Activated CD4-positive, alpha-beta memory T cell treated with anti-CD3 and anti-CD28 coated beads, Interleukin-2, amount 10 ng/mL, durations not matched to agents 7 days and 5 days (primary cell): ENCODE measurements at regions of chr16 and their contacts with region 1.

Region 1: DNA sequence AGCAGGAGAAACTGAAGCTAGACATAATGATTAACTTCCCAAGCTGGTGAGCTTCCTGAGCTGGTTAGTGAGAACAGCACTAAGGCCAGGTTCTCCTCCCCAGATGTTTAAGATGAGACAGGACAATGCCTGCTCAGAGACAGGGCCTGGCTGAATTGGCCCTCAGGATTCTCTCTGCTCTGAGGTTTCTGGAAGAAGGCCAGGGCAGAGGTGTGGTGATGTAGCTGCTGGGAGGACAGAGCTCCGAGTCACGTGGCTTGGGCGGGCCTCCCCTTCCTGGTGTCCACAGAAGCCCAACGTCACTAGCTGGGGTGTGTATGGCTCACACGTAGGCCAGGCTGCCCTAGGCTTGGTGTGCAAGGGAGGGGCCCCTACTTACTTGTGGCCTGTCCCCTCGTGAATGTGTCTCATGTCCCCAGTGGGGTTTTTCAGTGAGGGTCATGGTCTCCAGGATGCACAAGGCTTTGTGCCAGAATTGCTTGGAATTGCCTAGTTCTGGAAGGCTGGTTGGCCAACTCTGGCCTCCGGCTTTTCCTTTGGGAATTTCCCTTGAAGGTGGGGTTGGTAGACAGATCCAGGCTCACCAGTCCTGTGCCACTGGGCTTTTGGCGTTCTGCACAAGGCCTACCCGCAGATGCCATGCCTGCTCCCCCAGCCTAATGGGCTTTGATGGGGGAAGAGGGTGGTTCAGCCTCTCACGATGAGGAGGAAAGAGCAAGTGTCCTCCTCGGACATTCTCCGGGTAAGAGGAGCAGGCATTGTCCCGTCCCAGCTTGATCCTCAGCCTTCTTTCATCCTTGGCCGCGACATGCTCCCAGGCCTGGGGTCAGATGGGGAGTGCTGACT is 3.4 kb downstream of the NOD2 start:
- DNase-seq: peak; percentile 84
- H3K4me3 Mint-ChIP-seq: peak overlapping the region; percentile 87
- H3K27ac Mint-ChIP-seq: peak overlapping the region; percentile 81
- H3K4me1 Mint-ChIP-seq: peaks cover 84% of the 10 kb centered on the region
- H3K27me3 Mint-ChIP-seq: peaks cover 3% of the 10 kb centered on the region

Region 2: DNA sequence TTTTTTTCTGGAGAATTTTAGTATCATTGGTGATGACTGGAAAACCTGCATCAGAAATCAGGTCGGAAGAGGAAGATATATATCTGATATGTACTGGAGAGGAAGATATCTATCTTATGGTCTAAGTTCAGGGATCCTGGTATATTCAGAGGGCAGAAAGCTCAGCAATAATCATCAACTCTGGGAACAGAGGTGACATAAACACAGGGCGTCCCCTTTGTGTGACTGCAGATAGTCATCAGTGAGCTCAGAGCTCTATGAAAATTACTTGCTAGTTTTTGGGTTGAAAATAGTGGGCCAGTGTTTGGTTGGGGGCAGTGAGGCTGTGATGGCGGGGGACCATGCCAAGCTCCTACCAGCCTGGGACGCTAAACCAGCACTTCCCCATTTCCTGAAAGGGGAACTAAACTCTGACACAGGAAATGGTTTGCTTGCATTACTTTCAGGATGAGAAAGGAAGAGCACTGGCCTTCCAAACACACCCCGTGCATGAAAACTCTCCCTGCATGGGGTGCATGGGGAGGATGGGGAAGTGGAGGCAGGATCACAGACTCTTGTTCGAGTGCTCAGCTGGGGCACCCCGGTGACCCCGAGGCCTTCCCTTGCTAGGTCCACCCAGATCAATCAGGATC is 12.4 kb after region 1 on chr16:
- CTCF ChIA-PET with region 1: no interaction called
- POLR2A ChIA-PET with region 1: interaction called, 20 read pairs
- DNase-seq: no peak
- H3K4me3 Mint-ChIP-seq: peak overlapping the region; percentile 28
- H3K27ac Mint-ChIP-seq: peak overlapping the region; percentile 75
- H3K4me1 Mint-ChIP-seq: peaks cover 54% of the 10 kb centered on the region
- H3K27me3 Mint-ChIP-seq: no peaks in the 10 kb centered on the region

Region 3: DNA sequence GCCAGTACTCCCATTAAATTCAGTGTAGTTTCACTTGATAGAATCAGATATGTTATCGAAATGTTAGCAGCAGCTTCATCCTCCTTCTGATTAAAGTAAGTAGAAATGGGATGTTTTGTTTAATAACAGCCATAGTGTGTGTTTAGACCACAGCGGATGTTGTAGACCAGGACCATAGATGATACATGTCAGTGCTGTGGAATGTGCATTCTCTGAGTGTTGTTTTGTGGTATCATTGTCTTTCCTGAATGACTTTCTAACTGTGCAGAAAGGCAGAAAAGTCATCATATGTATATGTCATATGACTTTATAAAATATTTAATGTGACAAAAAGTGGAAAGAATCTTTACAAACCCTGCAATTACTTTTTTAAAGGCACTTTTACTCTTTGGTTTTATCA is 100.7 kb after region 1 on chr16:
- CTCF ChIA-PET with region 1: no interaction called
- POLR2A ChIA-PET with region 1: no interaction called
- DNase-seq: no peak
- H3K4me3 Mint-ChIP-seq: no peak overlapping the region
- H3K27ac Mint-ChIP-seq: no peak overlapping the region
- H3K4me1 Mint-ChIP-seq: no peaks in the 10 kb centered on the region
- H3K27me3 Mint-ChIP-seq: no peaks in the 10 kb centered on the region

Region 4: GRCh38 chr16:50814541-50814940 is 117.7 kb after region 1 on chr16:
- CTCF ChIA-PET with region 1: no interaction called
- POLR2A ChIA-PET with region 1: no interaction called
- DNase-seq: no peak
- H3K4me3 Mint-ChIP-seq: no peak overlapping the region
- H3K27ac Mint-ChIP-seq: no peak overlapping the region
- H3K4me1 Mint-ChIP-seq: no peaks in the 10 kb centered on the region
- H3K27me3 Mint-ChIP-seq: no peaks in the 10 kb centered on the region